Dendritic cell treated with granulocyte-macrophage colony-stimulating factor and Interleukin-4, amounts not matched to agents 40 ng/mL and 50 ng/mL, for 4 days (primary cell): ENCODE measurements at regions of chr4 and their contacts with region 1.

Region 1: GRCh38 chr4:5142726-5143125 is 91.4 kb downstream of the STK32B start:
- H3K4me3 Mint-ChIP-seq: no peak overlapping the region
- H3K27ac Mint-ChIP-seq: no peak overlapping the region
- H3K4me1 Mint-ChIP-seq: no peaks in the 10 kb centered on the region
- H3K27me3 Mint-ChIP-seq: no peaks in the 10 kb centered on the region

Region 2: DNA sequence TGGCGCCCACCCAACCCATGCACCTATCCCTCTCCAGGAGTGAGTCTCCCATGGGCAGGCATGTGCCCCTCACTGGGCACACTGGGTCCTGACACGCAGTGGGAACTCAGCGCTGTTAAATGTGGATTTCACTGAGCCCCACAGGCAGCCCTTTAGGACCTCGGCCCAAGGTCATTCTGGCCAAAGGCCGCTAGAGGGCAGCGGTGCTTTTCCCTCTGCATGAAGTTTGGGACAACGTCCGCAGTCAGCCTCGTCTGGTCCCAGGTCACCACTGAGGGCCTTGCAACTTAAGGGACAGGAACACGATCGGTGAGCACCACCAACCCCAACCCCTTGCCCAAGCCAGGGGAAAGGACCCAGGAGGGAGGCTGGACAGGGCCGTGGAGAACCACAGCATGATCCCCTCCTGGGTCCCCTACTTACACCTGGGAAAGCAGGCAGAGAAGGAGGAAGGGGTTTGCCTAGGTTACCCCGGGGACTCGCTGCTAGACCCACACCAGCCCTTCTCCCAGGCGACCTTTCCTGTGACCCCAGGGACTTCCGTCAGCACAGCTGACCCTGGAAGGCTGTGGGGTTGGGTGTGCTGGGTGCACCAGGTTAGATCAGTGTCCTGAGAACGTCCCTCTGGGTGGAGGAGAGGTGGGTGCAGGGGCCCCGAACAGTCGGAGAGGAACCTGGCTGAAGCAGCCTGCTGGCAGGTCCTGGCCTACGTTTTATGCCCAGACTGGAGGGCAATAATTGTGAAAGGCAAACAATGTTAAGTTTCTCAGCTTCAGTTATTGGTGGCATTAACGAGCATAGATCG is 147.4 kb before region 1 on chr4:
- intact Hi-C with region 1: loop called (anchors 1 kb)
- H3K4me3 Mint-ChIP-seq: no peak overlapping the region
- H3K27ac Mint-ChIP-seq: no peak overlapping the region
- H3K4me1 Mint-ChIP-seq: peaks cover 5% of the 10 kb centered on the region
- H3K27me3 Mint-ChIP-seq: peaks cover 4% of the 10 kb centered on the region

Region 3: GRCh38 chr4:5186271-5187064 is 43.7 kb after region 1 on chr4:
- intact Hi-C with region 1: no loop called
- H3K4me3 Mint-ChIP-seq: no peak overlapping the region
- H3K27ac Mint-ChIP-seq: no peak overlapping the region
- H3K4me1 Mint-ChIP-seq: no peaks in the 10 kb centered on the region
- H3K27me3 Mint-ChIP-seq: no peaks in the 10 kb centered on the region

Region 4: DNA sequence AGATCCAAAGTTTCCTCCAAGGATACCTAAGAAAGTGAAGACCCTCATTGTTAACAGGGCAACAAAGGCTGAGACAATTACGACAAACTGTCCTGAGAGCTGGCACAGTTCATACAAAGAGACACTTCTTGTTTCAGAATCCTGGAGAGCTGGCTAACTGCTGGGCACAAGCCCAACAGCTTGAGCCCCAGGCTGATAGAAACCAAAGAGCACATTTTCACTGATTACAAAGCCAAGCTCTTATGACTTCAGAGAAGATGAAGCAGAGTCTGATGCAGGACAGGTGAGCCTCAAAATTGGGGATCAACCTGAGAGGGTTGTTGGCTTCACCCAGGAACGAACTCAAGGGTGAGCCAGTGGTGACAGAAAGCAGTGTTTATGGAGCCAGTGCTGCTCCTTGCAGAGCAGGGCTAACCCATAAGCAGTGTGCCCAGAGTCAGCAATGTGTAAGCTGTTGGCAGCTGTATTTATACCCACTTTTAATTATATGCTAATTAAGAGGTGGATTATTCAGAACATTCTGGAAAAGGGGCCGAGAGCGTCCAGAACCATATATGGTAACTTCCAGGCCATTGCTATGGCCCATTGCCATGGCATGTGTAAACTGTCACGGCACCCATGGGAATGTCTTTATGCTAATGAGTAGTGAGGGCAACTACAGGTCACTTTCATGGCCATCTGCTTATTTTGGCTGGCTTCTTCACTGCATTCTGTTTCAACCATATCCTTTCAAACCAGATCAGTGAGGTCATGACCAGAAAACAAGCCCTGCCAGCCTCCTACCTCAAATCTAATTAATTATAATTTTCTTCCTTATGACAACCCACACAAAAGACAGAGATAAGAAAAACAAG is 381.9 kb after region 1 on chr4:
- intact Hi-C with region 1: no loop called
- H3K4me3 Mint-ChIP-seq: no peak overlapping the region
- H3K27ac Mint-ChIP-seq: no peak overlapping the region
- H3K4me1 Mint-ChIP-seq: no peaks in the 10 kb centered on the region
- H3K27me3 Mint-ChIP-seq: no peaks in the 10 kb centered on the region